ENCODE measurements at regions of chr9 and their contacts with region 1.

Region 1: DNA sequence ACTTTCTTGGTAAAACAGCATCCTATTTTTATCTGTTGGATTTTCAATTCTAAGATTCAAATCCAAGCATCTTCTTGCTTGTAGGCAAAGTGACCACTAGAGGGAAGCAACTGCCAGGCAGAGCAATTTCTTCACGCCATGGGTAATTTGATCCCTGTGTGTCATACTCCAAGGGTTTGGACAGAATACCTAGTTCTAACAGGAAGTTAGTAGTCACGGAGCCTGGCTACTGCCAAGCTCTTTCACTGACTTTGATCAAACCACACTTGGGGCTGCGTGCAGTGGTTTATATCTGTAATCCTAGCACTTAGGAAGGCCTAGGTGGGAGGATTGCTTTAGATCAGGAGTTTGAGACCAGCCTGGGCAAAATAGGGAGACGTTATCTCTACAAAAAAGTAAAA is 473.6 kb upstream of the TNC start:
- DNase-seq: peak; percentile 62 to 70
- ATAC-seq: peak; percentile 97 to 99
- H3K4me3 ChIP-seq: no peak overlapping the region
- H3K27ac ChIP-seq: peak overlapping the region; percentile 52 to 77 (median 65)
- H3K4me1 ChIP-seq: peaks cover 0 to 6% of the 10 kb centered on the region in 2 donors
- H3K27me3 ChIP-seq: peaks cover 4 to 10% (median 9%) of the 10 kb centered on the region in 3 donors
- CTCF ChIP-seq: peak; percentile 48 to 80 (median 78)
- POLR2A ChIP-seq: no peak

Region 2: GRCh38 chr9:115694014-115694413 is 102.4 kb after region 1 on chr9:
- in situ Hi-C with region 1: no loop called
- intact Hi-C with region 1: loop called (anchors 10 kb)
- DNase-seq: peak in 1 of 2 donors; percentile 25
- ATAC-seq: peak; percentile 65 to 74
- H3K4me3 ChIP-seq: no peak overlapping the region
- H3K27ac ChIP-seq: no peak overlapping the region
- H3K4me1 ChIP-seq: no peaks in the 10 kb centered on the region
- H3K27me3 ChIP-seq: no peaks in the 10 kb centered on the region
- CTCF ChIP-seq: no peak
- POLR2A ChIP-seq: no peak

Region 3: GRCh38 chr9:116149844-116150243 is 558.3 kb after region 1 on chr9:
- in situ Hi-C with region 1: loop called in 2 of 4 experiments (anchors 25 kb)
- intact Hi-C with region 1: loop called (anchors 5 kb)
- DNase-seq: peak in 1 of 2 donors; percentile 25
- ATAC-seq: peak in 1 of 2 donors; percentile 68
- H3K4me3 ChIP-seq: no peak overlapping the region
- H3K27ac ChIP-seq: no peak overlapping the region
- H3K4me1 ChIP-seq: peaks cover 0 to 6% of the 10 kb centered on the region in 2 donors
- H3K27me3 ChIP-seq: peaks cover 0 to 13% (median 0%) of the 10 kb centered on the region in 3 donors
- CTCF ChIP-seq: peak; percentile 24 to 64 (median 54)
- POLR2A ChIP-seq: no peak

Region 4: GRCh38 chr9:116566677-116567488 is 975.3 kb after region 1 on chr9:
- in situ Hi-C with region 1: loop called in 3 of 4 experiments (anchors 5 to 10 kb)
- intact Hi-C with region 1: loop called (anchors 1 kb)
- DNase-seq: no peak
- ATAC-seq: no peak
- H3K4me3 ChIP-seq: no peak overlapping the region
- H3K27ac ChIP-seq: no peak overlapping the region
- H3K4me1 ChIP-seq: peaks cover 5 to 8% of the 10 kb centered on the region in 2 donors
- H3K27me3 ChIP-seq: no peaks in the 10 kb centered on the region
- CTCF ChIP-seq: no peak
- POLR2A ChIP-seq: no peak

Region 5: DNA sequence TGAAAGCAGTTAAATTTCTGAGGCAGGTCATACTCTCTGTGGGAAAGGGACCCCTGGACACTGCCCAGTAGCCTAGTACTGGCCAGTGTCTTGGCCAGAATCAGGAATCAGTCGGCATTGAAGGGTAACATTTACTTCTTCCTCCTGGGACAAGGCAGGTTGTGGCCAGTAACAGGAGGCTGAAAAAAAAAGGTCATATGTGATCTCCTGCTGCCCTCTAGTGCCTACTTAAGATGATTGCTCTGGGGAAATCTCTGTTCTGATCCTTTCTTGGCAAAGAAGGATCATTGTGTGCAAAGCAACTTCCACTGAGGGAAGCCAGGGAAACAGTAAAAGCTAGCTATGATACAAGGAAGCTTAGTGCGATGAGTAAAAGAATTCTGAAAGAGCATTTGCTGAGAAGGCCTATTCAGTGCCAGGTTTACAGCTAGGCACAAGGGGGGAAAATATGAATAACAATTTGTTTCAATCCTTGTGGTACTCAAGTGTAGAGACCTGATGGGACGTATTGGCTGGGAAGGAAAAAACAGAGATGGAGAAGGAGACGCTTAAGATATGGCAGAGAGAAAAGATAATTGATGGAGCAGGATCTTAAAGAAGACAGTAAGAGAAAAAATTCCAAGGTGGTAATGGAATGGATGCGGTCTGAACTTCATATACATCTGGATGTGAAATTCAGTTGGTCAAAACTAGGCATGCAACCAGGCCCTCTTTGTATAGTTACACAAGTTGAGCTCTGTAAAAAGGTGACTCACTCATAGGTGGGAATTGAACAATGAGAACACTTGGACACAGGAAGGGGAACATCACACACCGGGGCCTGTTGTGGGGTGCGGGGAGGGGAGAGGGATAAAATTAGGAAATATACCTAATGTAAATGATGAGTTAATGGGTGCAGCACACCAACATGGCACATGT is 1069.7 kb after region 1 on chr9:
- in situ Hi-C with region 1: loop called in 3 of 4 experiments (anchors 5 to 25 kb)
- intact Hi-C with region 1: loop called (anchors 5 kb)
- DNase-seq: peak in 1 of 2 donors; percentile 23
- ATAC-seq: peak; percentile 90 to 95
- H3K4me3 ChIP-seq: no peak overlapping the region
- H3K27ac ChIP-seq: no peak overlapping the region
- H3K4me1 ChIP-seq: peaks cover 5 to 32% of the 10 kb centered on the region in 2 donors
- H3K27me3 ChIP-seq: no peaks in the 10 kb centered on the region
- CTCF ChIP-seq: peak; percentile 69 to 76 (median 73)
- POLR2A ChIP-seq: no peak

Measured in gastrocnemius medialis (tissue), 4 donors.